K562 (cell line): ENCODE measurements at regions of chr3 and their contacts with region 1.

Region 1: DNA sequence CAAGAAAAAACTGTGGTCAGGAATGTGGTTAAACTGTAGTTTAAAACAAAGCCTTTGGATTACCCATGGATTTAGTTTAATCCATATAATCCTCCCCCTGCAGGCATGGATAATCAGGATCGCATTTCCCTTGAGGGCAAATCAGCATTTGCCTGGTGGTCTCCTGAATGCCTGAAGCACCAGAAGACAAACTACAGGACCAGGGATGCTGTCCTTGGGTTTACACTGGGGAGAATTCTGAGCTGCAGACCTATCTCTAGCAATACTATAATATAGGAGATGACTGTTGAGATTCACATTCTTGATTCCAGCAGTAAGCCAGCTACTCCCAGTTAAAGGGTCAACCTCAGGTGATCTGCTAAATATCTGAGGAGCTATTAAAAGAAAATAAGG is 10.6 kb downstream of the PIK3CB start:
- DNase-seq: peak in 1 of 4 experiments; percentile 11
- ATAC-seq: peak; percentile 49
- H3K4me3 ChIP-seq: no peak overlapping the region
- H3K27ac ChIP-seq: peak overlapping the region; percentile 62; the same call in 2 of the 3 replicates
- H3K4me1 ChIP-seq: peaks cover 17 to 28% of the 10 kb centered on the region in 2 experiments; a peak in 4 of 5 replicates
- H3K27me3 ChIP-seq: no peaks in the 10 kb centered on the region
- CTCF ChIP-seq: no peak
- EP300 ChIP-seq: no peak
- POLR2A ChIP-seq: no peak
- RAD21 ChIP-seq: no peak

Region 2: GRCh38 chr3:138806376-138807080 is 17.6 kb before region 1 on chr3:
- CTCF ChIA-PET with region 1: no interaction called
- POLR2A ChIA-PET with region 1: interaction called, 24 read pairs
- in situ Hi-C with region 1: no loop called
- intact Hi-C with region 1: no loop called
- DNase-seq: no peak
- ATAC-seq: no peak
- H3K4me3 ChIP-seq: no peak overlapping the region
- H3K27ac ChIP-seq: no peak overlapping the region
- H3K4me1 ChIP-seq: peaks cover 0 to 3% of the 10 kb centered on the region in 2 experiments; a peak in 2 of 5 replicates
- H3K27me3 ChIP-seq: no peaks in the 10 kb centered on the region
- CTCF ChIP-seq: no peak
- EP300 ChIP-seq: no peak
- POLR2A ChIP-seq: no peak
- RAD21 ChIP-seq: no peak

Region 3: GRCh38 chr3:139533781-139534443 is 709.8 kb after region 1 on chr3:
- CTCF ChIA-PET with region 1: no interaction called
- POLR2A ChIA-PET with region 1: no interaction called
- in situ Hi-C with region 1: no loop called
- intact Hi-C with region 1: no loop called
- DNase-seq: peak; percentile 15 to 23 (median 18)
- ATAC-seq: peak; percentile 32
- H3K4me3 ChIP-seq: no peak overlapping the region
- H3K27ac ChIP-seq: no peak overlapping the region
- H3K4me1 ChIP-seq: peaks cover 6 to 17% of the 10 kb centered on the region in 2 experiments
- H3K27me3 ChIP-seq: peaks cover 14 to 40% of the 10 kb centered on the region in 2 experiments
- CTCF ChIP-seq: no peak
- EP300 ChIP-seq: no peak
- POLR2A ChIP-seq: no peak
- RAD21 ChIP-seq: no peak